Dorsolateral prefrontal cortex (tissue), 120 donors: ENCODE measurements at regions of chr6 and their contacts with region 1.

Region 1: GRCh38 chr6:17032988-17033634 is 68.7 kb upstream of the STMND1 start:
- DNase-seq: peak in 8 of 10 donors; percentile 21 to 84 (median 58)
- H3K4me3 ChIP-seq: peak overlapping the region in 58 of 59 donors; percentile 7 to 61 (median 41)
- H3K27ac ChIP-seq: peak overlapping the region in 55 of 59 donors; percentile 2 to 94 (median 82)
- H3K27me3 ChIP-seq: no peaks in the 10 kb centered on the region
- CTCF ChIP-seq: peak in 2 of 56 donors; percentile 7 to 10

Region 2: DNA sequence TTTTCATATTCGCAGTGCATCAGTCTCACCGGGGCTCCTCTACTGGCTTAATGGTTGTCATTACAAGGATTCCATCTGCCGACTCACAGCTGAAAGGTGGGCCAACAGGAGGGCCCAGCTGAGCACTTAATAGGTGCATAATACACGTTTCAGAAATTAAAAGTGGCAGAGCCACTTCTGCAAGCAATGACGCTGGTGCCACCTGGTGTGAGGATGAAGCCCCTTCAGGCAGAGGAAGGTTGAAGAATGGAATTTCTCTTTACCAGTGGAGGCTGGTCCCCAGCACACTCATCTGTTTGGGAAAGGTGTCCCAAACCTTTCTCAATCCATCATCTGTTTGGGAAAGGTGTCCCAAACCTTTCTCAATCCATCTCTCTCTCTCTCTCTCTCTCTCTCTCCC is 60.6 kb after region 1 on chr6:
- intact Hi-C with region 1: loop called (anchors 5 kb)
- DNase-seq: no peak
- H3K4me3 ChIP-seq: peak overlapping the region in 5 of 59 donors; percentile 1 to 21 (median 9)
- H3K27ac ChIP-seq: peak overlapping the region in 31 of 59 donors; percentile 0 to 73 (median 48)
- H3K27me3 ChIP-seq: no peaks in the 10 kb centered on the region
- CTCF ChIP-seq: peak in 32 of 56 donors; percentile 9 to 42 (median 28)

Region 3: GRCh38 chr6:17493286-17493685 is 460.2 kb after region 1 on chr6:
- intact Hi-C with region 1: no loop called
- DNase-seq: no peak
- H3K4me3 ChIP-seq: no peak overlapping the region
- H3K27ac ChIP-seq: no peak overlapping the region
- H3K27me3 ChIP-seq: no peaks in the 10 kb centered on the region
- CTCF ChIP-seq: no peak